Spleen (tissue), 13 donors: ENCODE measurements at regions of chr6 and their contacts with region 1.

Region 1: DNA sequence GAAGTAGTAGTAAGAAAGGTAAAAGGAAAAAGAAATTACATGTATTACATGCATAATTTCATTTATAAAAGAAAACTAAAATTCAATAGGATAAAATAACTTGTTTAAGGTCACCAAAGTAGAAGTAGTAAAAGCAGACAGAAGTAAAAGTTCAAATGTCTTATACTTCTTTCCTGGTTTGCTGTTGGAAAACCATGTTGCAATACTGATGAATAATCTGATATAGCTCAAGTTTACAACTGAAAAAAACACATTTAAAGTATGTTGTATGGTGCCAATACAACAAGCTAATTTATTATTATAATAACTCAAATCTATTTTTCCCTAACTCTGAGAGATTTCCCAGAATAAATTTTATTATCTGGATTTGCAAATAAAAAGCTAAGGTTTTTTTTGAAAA is 78.3 kb downstream of the PHIP start:
- DNase-seq: no peak
- H3K4me3 ChIP-seq: no peak overlapping the region
- H3K27ac ChIP-seq: no peak overlapping the region
- H3K4me1 ChIP-seq: no peaks in the 10 kb centered on the region
- H3K27me3 ChIP-seq: no peaks in the 10 kb centered on the region
- CTCF ChIP-seq: no peak
- POLR2A ChIP-seq: no peak

Region 2: DNA sequence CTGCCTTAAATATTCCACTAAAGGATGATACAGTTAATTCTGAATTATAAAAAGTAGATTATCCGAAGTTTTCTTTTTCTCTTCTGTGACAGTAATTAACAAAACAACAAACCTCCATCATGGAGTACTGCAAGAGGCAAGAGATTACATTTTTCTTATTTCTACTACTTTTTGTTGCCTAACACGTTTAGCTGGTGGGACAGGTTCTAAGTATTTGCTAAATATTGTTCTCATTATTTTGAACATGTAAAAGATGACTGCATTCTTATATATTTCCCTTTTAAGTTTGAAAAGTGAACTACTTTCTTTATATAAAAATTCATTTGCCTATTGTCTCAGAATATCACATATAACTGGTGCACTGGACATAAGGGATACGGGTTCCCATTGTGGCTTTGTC is 48.3 kb before region 1 on chr6:
- intact Hi-C with region 1: loop called (anchors 10 kb)
- DNase-seq: no peak
- H3K4me3 ChIP-seq: no peak overlapping the region
- H3K27ac ChIP-seq: no peak overlapping the region
- H3K4me1 ChIP-seq: no peaks in the 10 kb centered on the region
- H3K27me3 ChIP-seq: no peaks in the 10 kb centered on the region
- CTCF ChIP-seq: no peak
- POLR2A ChIP-seq: no peak